Activated CD4-positive, alpha-beta T cell treated with anti-CD3 and anti-CD28 coated beads, Interleukin-2, amount 10 ng/mL, durations not matched to agents 24 days and 14 days (primary cell): ENCODE measurements at regions of chr3 and their contacts with region 1.

Region 1: GRCh38 chr3:141553055-141553454 is 66.2 kb downstream of the RASA2 start:
- DNase-seq: peak; percentile 81
- H3K4me3 Mint-ChIP-seq: peak overlapping the region; percentile 60
- H3K27ac Mint-ChIP-seq: peak overlapping the region; percentile 92
- H3K4me1 Mint-ChIP-seq: peaks cover 44% of the 10 kb centered on the region
- H3K27me3 Mint-ChIP-seq: no peaks in the 10 kb centered on the region

Region 2: DNA sequence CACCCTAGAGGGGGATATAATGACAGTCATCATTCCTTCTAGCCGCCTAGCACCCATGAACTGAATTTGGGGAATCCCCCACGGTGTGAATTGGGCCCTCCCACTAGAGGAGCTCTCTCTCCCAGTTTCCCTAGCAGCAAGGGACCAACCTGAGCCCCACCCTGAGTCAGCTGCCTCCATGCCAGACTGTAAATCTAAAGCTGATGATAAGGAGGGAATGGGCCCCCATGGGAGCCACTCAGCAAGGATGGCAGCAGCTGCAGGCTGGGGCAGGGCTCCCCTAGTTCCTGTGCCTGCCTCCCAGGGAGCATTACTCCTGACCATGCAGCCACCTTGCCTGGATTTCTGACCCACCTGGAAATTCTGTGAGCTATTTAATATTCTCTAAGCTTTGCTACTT is 378.4 kb before region 1 on chr3:
- intact Hi-C with region 1: no loop called
- DNase-seq: no peak
- H3K4me3 Mint-ChIP-seq: no peak overlapping the region
- H3K27ac Mint-ChIP-seq: no peak overlapping the region
- H3K4me1 Mint-ChIP-seq: no peaks in the 10 kb centered on the region
- H3K27me3 Mint-ChIP-seq: peaks cover 9% of the 10 kb centered on the region

Region 3: DNA sequence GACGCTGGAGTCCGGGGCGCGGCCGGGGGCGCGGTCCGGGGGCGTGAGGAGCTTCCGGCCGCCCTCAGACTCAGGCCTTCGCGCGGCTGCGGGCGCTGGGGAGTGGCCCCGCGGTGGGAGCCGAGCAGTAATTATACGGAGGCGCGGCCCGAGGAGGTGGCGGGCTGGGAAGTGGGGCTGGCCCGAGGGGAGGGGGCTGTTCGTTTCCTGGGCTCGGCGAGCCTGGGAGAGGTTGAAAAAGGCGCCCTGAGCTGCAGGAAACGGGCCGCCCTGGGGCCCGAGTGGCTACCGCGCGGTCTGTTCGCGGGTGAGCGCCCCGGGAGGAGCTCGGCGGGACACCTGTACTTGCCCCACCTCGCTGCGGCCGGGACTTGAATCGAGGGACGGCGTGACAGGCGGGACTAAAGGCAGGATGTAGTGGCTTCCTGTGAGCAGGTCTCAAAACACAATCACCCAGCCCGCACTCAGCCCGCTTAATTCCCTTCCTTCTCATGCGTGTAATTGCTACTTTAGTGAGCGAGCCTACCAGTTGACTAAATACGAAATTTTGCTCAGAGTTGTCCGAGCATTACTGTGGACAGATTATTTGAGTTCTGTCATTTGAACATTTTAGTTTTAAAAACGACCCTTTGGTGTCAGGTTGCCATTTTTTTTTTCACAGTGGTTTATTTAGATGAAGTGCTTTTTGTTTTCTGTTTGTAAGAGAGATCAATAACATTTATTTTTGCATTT is 65.4 kb before region 1 on chr3:
- intact Hi-C with region 1: loop called (anchors 1 kb)
- DNase-seq: peak; percentile 96
- H3K4me3 Mint-ChIP-seq: peak overlapping the region; percentile 92
- H3K27ac Mint-ChIP-seq: peak overlapping the region; percentile 92
- H3K4me1 Mint-ChIP-seq: peaks cover 58% of the 10 kb centered on the region
- H3K27me3 Mint-ChIP-seq: peaks cover 2% of the 10 kb centered on the region

Region 4: GRCh38 chr3:141542989-141543388 is 10.1 kb before region 1 on chr3:
- intact Hi-C with region 1: loop called (anchors 1 kb)
- DNase-seq: no peak
- H3K4me3 Mint-ChIP-seq: no peak overlapping the region
- H3K27ac Mint-ChIP-seq: peak overlapping the region; percentile 54
- H3K4me1 Mint-ChIP-seq: peaks cover 31% of the 10 kb centered on the region
- H3K27me3 Mint-ChIP-seq: no peaks in the 10 kb centered on the region